Lower leg skin (tissue), 4 donors: ENCODE measurements at regions of chr16 and their contacts with region 1.

Region 1: GRCh38 chr16:84785843-84786581 is 33.8 kb upstream of the CRISPLD2 start:
- DNase-seq: no peak
- H3K4me3 ChIP-seq: no peak overlapping the region
- CTCF ChIP-seq: no peak
- POLR2A ChIP-seq: no peak

Region 2: DNA sequence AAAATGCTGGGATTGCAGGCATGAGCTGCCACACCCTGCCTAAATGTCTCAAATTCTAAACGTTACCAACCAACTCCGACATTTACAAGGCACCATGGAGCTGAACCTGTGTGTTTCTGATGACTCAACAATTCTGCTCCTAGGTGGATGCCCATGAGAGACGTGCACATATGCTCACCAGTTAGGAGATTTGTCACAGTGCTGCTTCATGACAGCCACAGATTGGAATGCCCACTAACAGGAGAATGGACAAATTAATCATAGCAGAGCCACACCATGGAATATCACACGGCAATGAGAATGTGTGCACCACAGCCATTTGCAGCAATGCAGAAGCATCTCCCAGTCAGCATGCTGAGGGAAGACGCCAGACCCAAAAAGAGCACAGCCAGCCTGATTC is 538.2 kb before region 1 on chr16:
- intact Hi-C with region 1: no loop called
- DNase-seq: no peak
- H3K4me3 ChIP-seq: no peak overlapping the region
- CTCF ChIP-seq: no peak
- POLR2A ChIP-seq: no peak

Region 3: DNA sequence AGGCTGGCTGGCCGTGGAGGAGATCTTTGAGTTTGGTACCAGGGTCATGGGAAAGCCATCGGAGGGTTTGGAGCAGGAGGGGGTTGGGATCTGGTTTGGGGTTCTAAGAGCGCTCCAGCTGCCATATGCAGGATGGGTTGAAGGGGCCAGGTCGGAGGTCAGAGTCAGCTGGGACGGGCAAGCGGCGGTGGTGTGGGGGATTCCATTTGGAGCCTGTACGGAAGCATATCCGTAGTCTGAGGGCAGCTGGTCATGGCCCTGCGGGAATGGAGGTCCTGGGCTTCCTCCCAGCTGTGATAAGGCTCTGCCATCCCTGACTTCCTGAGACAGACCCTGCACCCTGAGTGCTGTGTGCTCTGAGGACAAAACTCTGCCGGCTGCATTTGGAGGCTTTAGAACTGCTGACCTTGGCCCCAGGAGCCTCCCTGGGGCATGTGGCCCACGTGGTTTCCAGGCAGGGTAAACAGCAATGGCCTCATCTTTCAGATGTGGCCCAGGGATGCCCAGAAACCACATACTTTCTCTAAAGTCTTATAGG is 371.2 kb before region 1 on chr16:
- intact Hi-C with region 1: loop called (anchors 10 kb)
- DNase-seq: no peak
- H3K4me3 ChIP-seq: no peak overlapping the region
- CTCF ChIP-seq: no peak
- POLR2A ChIP-seq: no peak